ENCODE measurements at regions of chr6 and their contacts with region 1.

Region 1: DNA sequence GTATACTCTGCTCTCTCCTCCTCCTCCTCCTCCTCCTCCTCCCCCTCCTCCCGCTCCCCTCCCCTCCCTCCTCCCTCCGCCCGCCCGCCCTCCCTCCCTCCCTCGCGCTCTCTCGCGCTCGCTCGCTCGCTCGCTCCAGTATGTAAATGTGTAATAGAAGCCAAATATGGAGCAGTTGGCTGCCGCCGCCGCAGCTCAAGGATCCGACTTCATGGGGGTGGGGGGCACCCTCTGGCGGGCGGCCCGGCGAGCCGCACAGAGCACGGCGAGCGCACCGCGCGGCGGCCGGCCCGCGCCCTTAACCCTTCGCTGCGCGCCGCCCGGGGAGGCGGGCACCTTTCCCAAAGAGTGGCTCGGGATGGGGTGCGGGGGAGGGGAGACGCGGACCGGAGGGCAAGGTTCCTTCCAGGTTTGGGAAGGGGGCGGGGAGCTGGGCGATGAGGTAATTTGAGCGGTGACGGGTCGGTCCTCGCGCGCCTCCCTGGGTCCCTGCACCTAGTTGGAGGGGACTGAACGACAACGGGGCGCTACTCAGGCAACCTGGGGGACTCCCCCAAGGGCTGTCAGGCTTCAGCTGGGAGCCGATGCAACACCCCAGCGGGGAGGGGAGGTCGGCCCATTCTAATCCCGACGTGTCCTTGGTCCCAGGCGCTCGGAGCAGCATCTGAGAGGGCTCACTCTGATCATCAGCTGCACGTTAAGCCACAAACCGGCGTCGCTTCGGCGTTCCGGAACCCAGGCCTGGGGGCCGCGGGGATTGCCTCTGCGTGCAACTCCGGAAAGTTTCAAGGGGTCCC is 409 bp upstream of the ATXN1 start:
- DNase-seq: no peak
- H3K4me3 ChIP-seq: peak overlapping the region; percentile 77
- CTCF ChIP-seq: peak; percentile 36

Region 2: DNA sequence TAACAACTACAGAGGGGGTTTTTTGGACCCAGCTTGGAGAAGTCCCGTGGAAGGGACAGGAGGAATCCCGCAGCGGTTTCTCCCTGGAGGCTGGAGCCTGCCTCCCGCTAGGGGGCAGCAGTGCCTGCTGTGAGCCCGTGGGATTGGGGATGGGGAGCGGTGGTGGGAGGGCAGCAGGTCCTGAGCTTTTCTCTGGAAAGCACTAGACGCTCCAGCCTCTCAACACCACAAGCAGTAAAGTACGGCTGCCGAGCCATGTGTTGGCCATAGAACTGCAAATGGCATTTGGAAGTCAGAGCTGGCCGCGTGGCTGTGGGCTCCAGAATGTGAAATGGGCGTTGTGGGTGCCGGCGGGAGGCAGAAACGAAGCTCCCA is 475.5 kb before region 1 on chr6:
- CTCF ChIA-PET with region 1: interaction called, 29 read pairs
- POLR2A ChIA-PET with region 1: no interaction called
- DNase-seq: no peak
- H3K4me3 ChIP-seq: peak overlapping the region; percentile 25; the same call in 1 of the 2 replicates
- CTCF ChIP-seq: peak; percentile 95

Region 3: DNA sequence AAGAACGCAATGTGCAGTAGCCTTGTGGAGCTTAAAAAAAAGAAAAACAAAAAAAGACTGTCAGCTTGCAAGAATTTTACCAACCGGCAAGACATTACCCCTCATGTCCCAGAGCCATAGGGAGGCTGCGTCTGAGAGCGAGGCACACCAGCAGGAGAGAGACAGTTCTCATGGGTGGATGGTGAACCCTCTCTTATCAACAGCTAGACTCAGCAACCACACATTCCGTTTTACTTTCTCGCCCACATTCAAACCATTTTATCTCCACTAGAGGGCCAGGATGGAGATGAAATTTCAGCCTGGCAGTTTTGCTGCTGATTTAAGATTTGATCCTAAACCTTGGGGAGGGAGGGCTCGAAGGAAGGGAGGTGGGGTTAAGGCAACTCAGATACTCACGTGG is 247.4 kb before region 1 on chr6:
- CTCF ChIA-PET with region 1: interaction called, 111 read pairs
- POLR2A ChIA-PET with region 1: interaction called, 4 read pairs
- DNase-seq: no peak
- H3K4me3 ChIP-seq: no peak overlapping the region
- CTCF ChIP-seq: peak; percentile 51

Region 4: GRCh38 chr6:16964553-16965501 is 203.2 kb after region 1 on chr6:
- CTCF ChIA-PET with region 1: interaction called, 37 read pairs
- POLR2A ChIA-PET with region 1: no interaction called
- DNase-seq: no peak
- H3K4me3 ChIP-seq: no peak overlapping the region
- CTCF ChIP-seq: peak; percentile 93

Region 5: GRCh38 chr6:17086469-17086868 is 324.8 kb after region 1 on chr6:
- CTCF ChIA-PET with region 1: interaction called, 150 read pairs
- POLR2A ChIA-PET with region 1: interaction called, 3 read pairs
- DNase-seq: peak; percentile 24
- H3K4me3 ChIP-seq: no peak overlapping the region
- CTCF ChIP-seq: peak; percentile 57

Measured in AG04449 (cell line).